Aorta (tissue), 5 donors: ENCODE measurements at regions of chr9 and their contacts with region 1.

Region 1: GRCh38 chr9:129737479-129738274 is 15.2 kb downstream of the PTGES start:
- DNase-seq: peak; percentile 91 to 95
- ATAC-seq: peak; percentile 94
- H3K4me3 ChIP-seq: peak overlapping the region; percentile 23 to 71
- H3K27ac ChIP-seq: peak overlapping the region in 1 of 2 donors; percentile 15
- H3K4me1 ChIP-seq: no peaks in the 10 kb centered on the region
- H3K27me3 ChIP-seq: no peaks in the 10 kb centered on the region

Region 2: DNA sequence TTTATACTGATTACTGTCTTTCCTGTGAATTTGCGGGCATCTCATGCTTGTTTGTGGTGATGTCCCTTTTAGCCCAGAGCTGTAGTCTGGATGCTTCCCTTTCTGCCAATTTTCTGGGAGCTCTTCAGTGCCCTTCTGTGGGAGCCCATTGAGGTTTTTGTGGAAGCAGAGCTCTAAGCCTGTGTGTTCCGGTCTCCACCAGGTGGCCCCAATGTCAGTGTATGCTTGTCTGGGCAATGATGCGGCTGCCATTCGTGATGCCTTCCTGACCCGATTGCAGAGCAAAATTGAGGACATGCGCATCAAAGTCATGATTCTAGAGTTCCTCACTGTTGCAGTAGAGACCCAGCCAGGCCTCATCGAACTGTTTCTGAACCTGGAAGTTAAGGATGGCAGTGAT is 744.7 kb before region 1 on chr9:
- intact Hi-C with region 1: no loop called
- DNase-seq: peak in 1 of 2 donors; percentile 52
- ATAC-seq: no peak
- H3K4me3 ChIP-seq: no peak overlapping the region
- H3K27ac ChIP-seq: no peak overlapping the region
- H3K4me1 ChIP-seq: no peaks in the 10 kb centered on the region
- H3K27me3 ChIP-seq: no peaks in the 10 kb centered on the region

Region 3: GRCh38 chr9:129617167-129617566 is 120.5 kb before region 1 on chr9:
- intact Hi-C with region 1: no loop called
- DNase-seq: no peak
- ATAC-seq: no peak
- H3K4me3 ChIP-seq: no peak overlapping the region
- H3K27ac ChIP-seq: no peak overlapping the region
- H3K4me1 ChIP-seq: no peaks in the 10 kb centered on the region
- H3K27me3 ChIP-seq: no peaks in the 10 kb centered on the region

Region 4: GRCh38 chr9:129676975-129677841 is 60.5 kb before region 1 on chr9:
- intact Hi-C with region 1: no loop called
- DNase-seq: peak in 1 of 2 donors; percentile 88
- ATAC-seq: peak; percentile 43
- H3K4me3 ChIP-seq: no peak overlapping the region
- H3K27ac ChIP-seq: no peak overlapping the region
- H3K4me1 ChIP-seq: no peaks in the 10 kb centered on the region
- H3K27me3 ChIP-seq: no peaks in the 10 kb centered on the region

Region 5: DNA sequence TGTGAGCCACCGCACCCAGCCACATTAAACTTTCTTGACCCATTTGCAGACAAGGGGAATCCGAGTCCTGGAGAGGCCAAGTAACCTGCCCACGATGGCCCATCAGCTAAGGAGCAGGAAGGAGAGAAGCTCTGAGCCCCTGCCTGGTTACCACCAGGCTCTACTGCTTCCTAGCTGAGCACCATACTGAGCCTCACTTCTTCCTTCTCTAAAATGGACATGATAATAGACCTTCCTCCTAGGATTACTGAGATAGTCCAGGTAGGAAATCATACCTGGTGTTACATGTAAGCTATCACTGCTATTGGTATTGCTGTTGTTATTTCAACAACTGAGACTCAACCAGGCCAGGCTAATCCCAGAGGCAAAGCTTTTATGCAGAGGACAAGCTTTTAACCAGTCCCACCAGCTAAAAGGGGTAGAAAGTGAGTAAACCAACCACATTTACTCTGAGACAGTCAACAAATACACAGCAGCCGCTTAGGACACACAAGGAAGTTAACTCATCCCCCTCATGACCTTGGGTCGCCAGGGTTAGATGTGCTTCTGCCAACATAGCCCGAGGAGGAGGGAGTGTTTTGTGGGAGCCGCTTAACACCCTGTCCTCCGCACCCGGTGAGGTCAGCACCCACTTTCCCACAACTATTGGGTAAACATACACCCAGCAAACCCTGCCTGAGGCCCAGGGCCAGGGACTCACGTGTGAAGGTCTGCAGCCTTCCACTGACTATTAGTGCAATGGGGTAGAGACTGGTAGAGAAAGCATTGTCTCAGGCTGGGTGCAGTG is 35.8 kb after region 1 on chr9:
- intact Hi-C with region 1: loop called in 1 of 2 experiments (anchors 2 kb)
- DNase-seq: peak in 1 of 2 donors; percentile 72
- ATAC-seq: no peak
- H3K4me3 ChIP-seq: no peak overlapping the region
- H3K27ac ChIP-seq: no peak overlapping the region
- H3K4me1 ChIP-seq: no peaks in the 10 kb centered on the region
- H3K27me3 ChIP-seq: no peaks in the 10 kb centered on the region

Region 6: DNA sequence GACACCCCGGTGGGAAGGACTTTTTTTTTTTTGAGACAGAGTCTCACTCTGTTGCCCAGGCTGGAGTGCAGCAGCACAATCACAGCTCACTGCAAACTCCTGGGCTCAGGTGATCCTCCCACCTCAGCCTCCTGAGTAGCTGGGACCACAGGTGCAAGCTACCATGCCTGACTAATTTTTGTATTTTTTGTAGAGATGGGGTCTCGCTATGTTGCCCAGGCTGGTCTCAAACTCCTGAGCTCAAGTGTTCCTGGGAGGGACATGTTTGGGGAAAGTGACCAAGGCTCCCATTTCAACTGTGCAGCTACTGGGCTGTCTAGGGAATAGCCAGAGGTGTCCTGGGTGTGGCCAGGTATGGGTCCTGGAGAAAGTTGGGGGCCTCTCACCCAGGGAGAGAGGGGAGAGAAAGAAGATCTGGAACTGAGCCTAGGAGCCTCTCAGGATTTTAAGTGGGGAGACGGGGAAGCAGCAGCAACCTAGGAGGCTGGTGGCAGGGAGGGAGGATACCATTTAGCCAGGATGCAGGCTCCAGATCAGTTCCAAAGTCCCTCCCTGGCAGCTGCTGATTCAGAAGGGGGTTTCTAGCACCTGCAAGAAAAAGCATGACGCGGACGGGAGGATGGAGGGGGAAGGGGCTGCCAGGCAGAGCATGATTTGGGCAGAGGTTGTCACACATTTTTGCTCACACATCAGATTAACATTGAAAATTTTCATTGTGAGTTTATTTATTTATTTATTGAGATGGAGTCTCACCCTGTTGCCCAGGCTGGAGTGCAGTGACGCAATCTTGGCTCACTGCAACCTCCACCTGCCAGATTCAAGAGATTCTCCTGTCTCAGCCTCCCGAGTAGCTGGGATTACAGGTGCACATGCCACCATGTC is 58.6 kb after region 1 on chr9:
- intact Hi-C with region 1: no loop called
- DNase-seq: no peak
- ATAC-seq: no peak
- H3K4me3 ChIP-seq: no peak overlapping the region
- H3K27ac ChIP-seq: no peak overlapping the region
- H3K4me1 ChIP-seq: no peaks in the 10 kb centered on the region
- H3K27me3 ChIP-seq: no peaks in the 10 kb centered on the region